ENCODE measurements at regions of chr9 and their contacts with region 1.

Region 1: DNA sequence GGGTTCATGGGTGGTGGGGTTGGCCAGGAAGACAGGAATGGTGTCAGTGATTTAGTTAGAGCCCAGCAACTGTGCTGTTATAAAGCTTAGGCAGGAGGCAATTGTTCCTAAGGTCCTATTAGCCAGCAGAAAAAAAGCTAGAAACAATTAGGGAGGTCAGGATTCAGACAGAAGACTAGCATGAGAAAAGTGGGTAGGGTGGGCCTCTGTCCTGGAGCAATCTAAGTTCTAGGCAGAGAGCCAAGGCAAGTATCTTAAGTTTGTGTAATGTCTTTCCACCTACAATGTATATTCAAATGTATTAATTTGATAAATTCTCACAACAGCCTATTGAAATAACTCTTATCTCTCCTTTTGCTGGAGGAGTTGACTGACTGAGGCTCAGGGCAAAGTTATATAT is 6.1 kb upstream of the ZFAND5 start:
- DNase-seq: no peak
- H3K4me3 ChIP-seq: no peak overlapping the region
- CTCF ChIP-seq: no peak

Region 2: GRCh38 chr9:72401396-72401795 is 30.2 kb after region 1 on chr9:
- in situ Hi-C with region 1: no loop called
- DNase-seq: no peak
- H3K4me3 ChIP-seq: no peak overlapping the region
- CTCF ChIP-seq: no peak

Region 3: GRCh38 chr9:72485821-72486593 is 114.9 kb after region 1 on chr9:
- in situ Hi-C with region 1: loop called (anchors 10 kb)
- DNase-seq: peak; percentile 49
- H3K4me3 ChIP-seq: no peak overlapping the region
- CTCF ChIP-seq: no peak